CD8-positive, alpha-beta memory T cell (primary cell): ENCODE measurements at regions of chr22 and their contacts with region 1.

Region 1: GRCh38 chr22:20550821-20551744 is 43.7 kb downstream of the MED15 start:
- DNase-seq: peak; percentile 41 to 80 (median 75)
- H3K4me3 ChIP-seq: peak overlapping the region; percentile 53
- H3K4me3 Mint-ChIP-seq: peak overlapping the region; percentile 82 to 96 (median 92)
- H3K27ac ChIP-seq: peak overlapping the region; percentile 70
- H3K27ac Mint-ChIP-seq: peak overlapping the region; percentile 90 to 100 (median 98)
- H3K4me1 ChIP-seq: peaks cover 95% of the 10 kb centered on the region
- H3K4me1 Mint-ChIP-seq: peaks cover 84 to 96% (median 90%) of the 10 kb centered on the region in 3 donors
- H3K27me3 ChIP-seq: no peaks in the 10 kb centered on the region
- H3K27me3 Mint-ChIP-seq: no peaks in the 10 kb centered on the region

Region 2: DNA sequence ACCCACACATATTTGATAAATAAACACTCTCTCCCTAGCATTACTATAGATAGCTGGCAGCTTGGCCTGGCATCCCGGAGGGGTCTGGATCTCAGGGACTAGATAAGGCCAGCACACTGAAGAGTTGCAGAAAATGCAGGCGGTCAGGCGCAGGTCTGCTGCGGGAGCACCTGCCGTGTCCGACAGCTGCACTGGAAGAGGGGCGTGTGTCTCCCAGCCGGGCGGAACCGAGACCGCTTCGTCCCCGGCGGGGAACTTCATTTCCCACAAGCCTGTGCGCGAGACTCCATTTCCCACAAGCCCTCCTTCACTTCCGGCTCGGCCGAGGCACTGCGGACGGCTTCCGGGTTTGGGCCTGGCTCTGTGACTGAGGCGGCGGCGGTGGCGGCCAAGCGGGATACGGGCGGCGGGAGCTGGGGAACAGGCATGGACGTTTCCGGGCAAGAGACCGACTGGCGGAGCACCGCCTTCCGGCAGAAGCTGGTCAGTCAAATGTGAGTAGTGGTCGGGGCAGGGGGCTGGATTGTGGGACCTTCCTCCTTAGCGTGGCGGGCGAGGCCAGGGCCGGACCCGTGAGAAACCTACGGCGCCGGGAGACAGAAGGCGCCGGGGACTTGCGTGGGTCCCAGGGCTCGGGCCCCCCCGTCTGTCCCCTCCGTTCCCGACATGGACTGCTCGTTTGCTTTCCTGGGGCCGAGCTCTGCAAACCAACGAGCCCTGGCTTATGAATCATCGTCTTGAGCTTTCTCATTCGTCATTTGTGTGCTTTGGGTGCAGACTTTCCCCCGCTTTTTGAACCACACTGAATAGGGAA is 43.6 kb before region 1 on chr22 and contains the start of gene MED15:
- CTCF ChIA-PET with region 1: interaction called, 13 read pairs
- POLR2A ChIA-PET with region 1: interaction called, 10 read pairs
- DNase-seq: peak; percentile 81 to 92 (median 82)
- H3K4me3 ChIP-seq: peak within 1 kb of the TSS; percentile 98
- H3K4me3 Mint-ChIP-seq: peak within 1 kb of the TSS; percentile 94 to 100 (median 97)
- H3K27ac ChIP-seq: peak within 1 kb of the TSS; percentile 99
- H3K27ac Mint-ChIP-seq: peak within 1 kb of the TSS; percentile 73 to 99 (median 97)
- H3K4me1 ChIP-seq: peaks cover 44% of the 10 kb centered on the region
- H3K4me1 Mint-ChIP-seq: peaks cover 48 to 56% (median 52%) of the 10 kb centered on the region in 3 donors
- H3K27me3 ChIP-seq: no peaks in the 10 kb centered on the region
- H3K27me3 Mint-ChIP-seq: peaks cover 0 to 1% of the 10 kb centered on the region in 2 donors
- total RNA-seq, gene MED15: 98.0 to 106 TPM

Region 3: DNA sequence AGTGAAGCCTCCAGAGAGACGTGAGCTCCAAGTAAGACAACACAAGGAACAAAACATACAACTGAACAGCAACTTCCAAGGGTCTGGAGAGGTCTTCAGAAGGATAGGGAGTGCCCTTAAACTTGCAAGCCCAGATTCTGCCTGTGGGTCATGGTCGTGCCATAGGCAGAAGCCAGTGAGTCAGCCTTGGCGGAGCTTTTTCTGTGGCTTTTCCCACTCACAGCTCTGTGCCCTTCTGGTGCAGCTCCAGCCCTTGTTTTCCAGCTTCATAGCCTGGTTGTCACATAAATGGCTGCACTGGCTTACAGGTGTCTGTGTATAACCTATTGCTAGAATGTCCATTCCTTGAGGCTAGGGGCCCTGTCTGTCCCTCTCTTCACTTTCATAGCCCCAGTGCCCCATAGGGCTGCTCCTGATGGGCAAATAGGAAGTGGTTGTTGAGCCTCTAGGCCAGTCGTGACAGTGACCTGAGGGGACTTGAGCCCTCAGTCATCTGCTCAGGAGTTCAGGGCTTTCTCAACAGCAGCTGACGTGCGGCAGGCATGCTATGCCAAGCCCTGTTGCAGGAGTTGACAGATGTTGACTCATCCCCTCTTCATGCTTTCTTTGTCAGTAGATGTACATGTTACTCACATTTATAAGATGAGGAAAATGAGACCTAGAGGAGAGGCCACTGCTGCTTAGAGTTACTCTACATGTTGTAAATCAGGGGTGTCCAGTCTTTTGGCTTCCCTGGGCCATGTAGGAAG is 36.3 kb before region 1 on chr22:
- CTCF ChIA-PET with region 1: interaction called, 13 read pairs
- POLR2A ChIA-PET with region 1: interaction called, 4 read pairs
- DNase-seq: no peak
- H3K4me3 ChIP-seq: no peak overlapping the region
- H3K4me3 Mint-ChIP-seq: peak overlapping the region in 1 of 7 donors; percentile 40
- H3K27ac ChIP-seq: no peak overlapping the region
- H3K27ac Mint-ChIP-seq: peak overlapping the region; percentile 28 to 89 (median 56)
- H3K4me1 ChIP-seq: peaks cover 71% of the 10 kb centered on the region
- H3K4me1 Mint-ChIP-seq: peaks cover 71 to 88% (median 83%) of the 10 kb centered on the region in 3 donors
- H3K27me3 ChIP-seq: no peaks in the 10 kb centered on the region
- H3K27me3 Mint-ChIP-seq: no peaks in the 10 kb centered on the region

Region 4: GRCh38 chr22:20568989-20569769 is 18.1 kb after region 1 on chr22:
- CTCF ChIA-PET with region 1: interaction called, 389 read pairs
- POLR2A ChIA-PET with region 1: interaction called, 226 read pairs
- DNase-seq: peak; percentile 74 to 95 (median 94)
- H3K4me3 ChIP-seq: peak overlapping the region; percentile 57
- H3K4me3 Mint-ChIP-seq: peak overlapping the region; percentile 85 to 92 (median 89)
- H3K27ac ChIP-seq: peak overlapping the region; percentile 26
- H3K27ac Mint-ChIP-seq: peak overlapping the region; percentile 94 to 100 (median 99)
- H3K4me1 ChIP-seq: peaks cover 83% of the 10 kb centered on the region
- H3K4me1 Mint-ChIP-seq: peaks cover 83 to 93% (median 93%) of the 10 kb centered on the region in 3 donors
- H3K27me3 ChIP-seq: no peaks in the 10 kb centered on the region
- H3K27me3 Mint-ChIP-seq: peaks cover 0 to 3% of the 10 kb centered on the region in 2 donors

Region 5: DNA sequence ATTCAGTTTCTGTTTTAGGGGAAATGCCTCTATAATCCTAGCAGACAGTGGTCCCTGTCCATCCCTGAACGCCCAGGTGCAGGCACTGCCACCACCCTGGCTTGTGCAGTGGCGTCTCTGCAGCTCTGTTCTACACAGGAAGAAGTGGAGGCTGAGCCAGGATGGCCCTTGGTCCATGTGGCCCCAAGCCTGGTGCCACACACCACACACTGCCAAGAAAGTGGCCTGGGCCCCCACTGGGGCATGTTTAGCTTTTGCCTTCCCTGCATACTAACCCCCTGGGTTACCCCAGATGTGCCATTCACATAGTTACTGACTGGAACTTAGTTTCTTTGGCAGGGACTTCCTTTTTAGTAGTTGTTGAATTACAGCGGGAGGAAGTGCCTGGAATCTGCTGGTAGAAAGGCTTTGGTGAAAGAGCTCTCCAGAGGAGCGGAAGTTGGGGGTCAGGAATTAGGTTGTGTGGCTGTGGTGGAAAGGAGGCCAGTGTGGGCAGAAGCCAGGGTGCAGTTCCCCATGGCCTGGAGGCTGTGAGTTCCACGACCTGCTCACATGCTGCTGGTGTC is 25.3 kb after region 1 on chr22:
- CTCF ChIA-PET with region 1: interaction called, 389 read pairs
- POLR2A ChIA-PET with region 1: interaction called, 226 read pairs
- DNase-seq: peak in 1 of 5 donors; percentile 31
- H3K4me3 ChIP-seq: no peak overlapping the region
- H3K4me3 Mint-ChIP-seq: peak overlapping the region in 2 of 7 donors; percentile 56 to 71
- H3K27ac ChIP-seq: no peak overlapping the region
- H3K27ac Mint-ChIP-seq: peak overlapping the region in 7 of 8 donors; percentile 29 to 88 (median 66)
- H3K4me1 ChIP-seq: peaks cover 29% of the 10 kb centered on the region
- H3K4me1 Mint-ChIP-seq: peaks cover 54 to 81% (median 59%) of the 10 kb centered on the region in 3 donors
- H3K27me3 ChIP-seq: no peaks in the 10 kb centered on the region
- H3K27me3 Mint-ChIP-seq: no peaks in the 10 kb centered on the region